Heart left ventricle (tissue), 16 donors: ENCODE measurements at regions of chr9 and their contacts with region 1.

Region 1: GRCh38 chr9:4555251-4555650 is 65.0 kb downstream of the SLC1A1 start:
- DNase-seq: peak in 4 of 5 donors; percentile 32 to 53 (median 42)
- ATAC-seq: peak in 3 of 4 donors; percentile 46 to 74 (median 52)
- H3K4me3 ChIP-seq: no peak overlapping the region
- H3K27ac ChIP-seq: peak overlapping the region in 9 of 12 donors; percentile 53 to 82 (median 69)
- H3K4me1 ChIP-seq: peaks cover 0 to 51% (median 17%) of the 10 kb centered on the region in 12 donors
- H3K27me3 ChIP-seq: no peaks in the 10 kb centered on the region
- CTCF ChIP-seq: no peak
- POLR2A ChIP-seq: no peak

Region 2: GRCh38 chr9:4382722-4383317 is 172.4 kb before region 1 on chr9:
- intact Hi-C with region 1: loop called in 1 of 10 experiments (anchors 5 kb)
- DNase-seq: no peak
- ATAC-seq: no peak
- H3K4me3 ChIP-seq: no peak overlapping the region
- H3K27ac ChIP-seq: no peak overlapping the region
- H3K4me1 ChIP-seq: no peaks in the 10 kb centered on the region
- H3K27me3 ChIP-seq: no peaks in the 10 kb centered on the region
- CTCF ChIP-seq: peak; percentile 30 to 74 (median 62)
- POLR2A ChIP-seq: no peak

Region 3: GRCh38 chr9:4596165-4596922 is 41.1 kb after region 1 on chr9:
- intact Hi-C with region 1: loop called in 3 of 10 experiments (anchors 2 to 5 kb)
- DNase-seq: no peak
- ATAC-seq: peak in 3 of 4 donors; percentile 20 to 62 (median 57)
- H3K4me3 ChIP-seq: no peak overlapping the region
- H3K27ac ChIP-seq: peak overlapping the region in 8 of 12 donors; percentile 1 to 44 (median 17)
- H3K4me1 ChIP-seq: peaks cover 0 to 18% (median 3%) of the 10 kb centered on the region in 12 donors
- H3K27me3 ChIP-seq: no peaks in the 10 kb centered on the region
- CTCF ChIP-seq: no peak
- POLR2A ChIP-seq: no peak

Region 4: GRCh38 chr9:4740638-4741364 is 185.6 kb after region 1 on chr9 and contains the start of gene AK3:
- intact Hi-C with region 1: no loop called
- DNase-seq: peak; percentile 91 to 94 (median 93)
- ATAC-seq: peak; percentile 89 to 95 (median 93)
- H3K4me3 ChIP-seq: peak within 1 kb of the TSS; percentile 54 to 98 (median 89)
- H3K27ac ChIP-seq: peak within 1 kb of the TSS; percentile 90 to 97 (median 94)
- H3K4me1 ChIP-seq: peaks cover 0 to 29% (median 15%) of the 10 kb centered on the region in 12 donors
- H3K27me3 ChIP-seq: no peaks in the 10 kb centered on the region
- CTCF ChIP-seq: peak in 10 of 12 donors; percentile 16 to 60 (median 34)
- POLR2A ChIP-seq: peak in 1 of 2 donors; percentile 87
- total RNA-seq, gene AK3: 117 to 231 (median 159) TPM